ENCODE measurements at regions of chr11 and their contacts with region 1.

Region 1: DNA sequence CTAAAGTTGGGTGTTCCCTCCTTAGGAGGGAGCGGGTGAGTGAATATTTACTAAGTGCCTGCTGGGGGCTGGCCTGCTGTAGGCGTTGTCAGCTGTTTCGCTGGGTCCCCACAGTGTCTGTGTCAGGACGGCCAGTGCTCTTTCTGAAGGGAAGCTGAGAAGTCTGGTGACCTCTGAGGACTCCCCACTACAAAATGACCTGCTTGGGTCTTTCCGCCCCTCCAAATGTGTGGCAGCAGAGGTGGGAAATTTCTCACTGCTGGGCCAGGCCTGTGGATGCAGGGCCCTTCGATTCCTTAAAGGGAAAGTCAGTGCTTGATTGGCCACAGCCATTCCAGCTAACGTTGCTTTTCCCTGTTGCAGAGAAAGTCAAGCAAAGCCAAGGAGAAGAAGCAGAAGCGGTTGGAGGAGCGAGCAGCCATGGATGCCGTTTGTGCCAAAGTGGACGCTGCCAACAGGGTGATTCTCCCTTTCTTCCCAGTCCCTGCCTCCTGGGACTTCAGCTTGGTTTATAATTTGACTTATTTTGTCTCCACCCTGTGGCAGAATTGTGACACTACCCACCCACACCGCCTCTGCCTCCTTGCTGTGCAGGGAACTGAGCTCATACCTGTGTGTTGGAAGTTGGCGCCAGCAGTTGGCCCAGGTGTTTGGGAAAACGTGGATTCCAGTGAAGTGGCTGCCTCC is 6.8 kb downstream of the NAA40 start:
- DNase-seq: no peak
- H3K4me3 ChIP-seq: no peak overlapping the region
- H3K27me3 ChIP-seq: no peaks in the 10 kb centered on the region
- CTCF ChIP-seq: peak; percentile 68

Region 2: GRCh38 chr11:63445720-63446119 is 499.9 kb before region 1 on chr11:
- CTCF ChIA-PET with region 1: no interaction called
- POLR2A ChIA-PET with region 1: no interaction called
- DNase-seq: no peak
- H3K4me3 ChIP-seq: no peak overlapping the region
- H3K27me3 ChIP-seq: peaks cover 1% of the 10 kb centered on the region; the same call in 1 of the 2 replicates
- CTCF ChIP-seq: no peak

Region 3: DNA sequence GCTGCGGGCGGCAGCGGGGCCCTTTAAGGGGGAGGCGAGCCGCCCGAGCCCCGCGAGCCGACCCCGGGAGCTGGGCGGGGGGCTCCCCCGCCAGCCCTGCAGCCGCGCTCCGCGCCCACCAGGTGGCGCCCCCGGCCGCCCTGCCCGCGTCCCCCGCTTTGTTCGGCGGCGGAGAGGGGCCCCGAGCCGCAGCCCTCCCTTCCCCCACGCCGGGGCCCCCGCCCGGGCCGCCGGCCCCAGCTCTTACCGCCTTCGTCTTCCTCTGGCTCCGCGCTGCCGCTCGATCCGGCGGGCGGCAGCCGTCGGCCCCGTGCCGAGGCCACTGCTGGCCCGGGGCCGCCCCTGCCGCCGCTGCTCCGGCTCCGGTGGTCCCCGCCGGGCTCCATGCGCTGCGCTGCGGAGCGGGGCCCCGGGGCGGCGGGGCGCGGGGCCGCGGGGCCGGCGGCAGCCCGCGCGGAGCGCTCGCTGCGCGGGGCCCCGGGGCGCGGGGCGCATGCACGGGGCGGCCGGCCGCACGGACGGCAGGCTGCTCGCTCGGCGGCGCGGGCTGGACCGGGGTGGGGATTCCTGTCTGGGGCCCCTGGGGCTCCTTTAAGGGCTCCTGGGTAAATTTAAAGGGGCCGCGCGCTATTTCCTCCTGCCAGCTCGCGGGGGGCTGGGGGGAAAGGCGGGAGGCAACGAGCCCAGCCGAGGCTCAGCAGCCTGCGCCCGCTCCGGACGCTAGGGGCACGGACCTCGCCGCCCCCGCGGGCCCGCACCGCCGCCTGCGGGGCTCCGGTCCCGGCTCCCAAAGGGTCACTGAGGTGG is 177.2 kb before region 1 on chr11 and contains the start of gene ZFTA:
- CTCF ChIA-PET with region 1: interaction called, 20 read pairs
- POLR2A ChIA-PET with region 1: no interaction called
- DNase-seq: no peak
- H3K4me3 ChIP-seq: peak within 1 kb of the TSS; percentile 68
- H3K27me3 ChIP-seq: no peaks in the 10 kb centered on the region
- CTCF ChIP-seq: 0 out of 2 replicates have a peak, but pooled peaks have one; percentile 11
- polyA plus RNA-seq, gene ZFTA: 4.7 and 5.8 TPM in 2 replicates

Region 4: DNA sequence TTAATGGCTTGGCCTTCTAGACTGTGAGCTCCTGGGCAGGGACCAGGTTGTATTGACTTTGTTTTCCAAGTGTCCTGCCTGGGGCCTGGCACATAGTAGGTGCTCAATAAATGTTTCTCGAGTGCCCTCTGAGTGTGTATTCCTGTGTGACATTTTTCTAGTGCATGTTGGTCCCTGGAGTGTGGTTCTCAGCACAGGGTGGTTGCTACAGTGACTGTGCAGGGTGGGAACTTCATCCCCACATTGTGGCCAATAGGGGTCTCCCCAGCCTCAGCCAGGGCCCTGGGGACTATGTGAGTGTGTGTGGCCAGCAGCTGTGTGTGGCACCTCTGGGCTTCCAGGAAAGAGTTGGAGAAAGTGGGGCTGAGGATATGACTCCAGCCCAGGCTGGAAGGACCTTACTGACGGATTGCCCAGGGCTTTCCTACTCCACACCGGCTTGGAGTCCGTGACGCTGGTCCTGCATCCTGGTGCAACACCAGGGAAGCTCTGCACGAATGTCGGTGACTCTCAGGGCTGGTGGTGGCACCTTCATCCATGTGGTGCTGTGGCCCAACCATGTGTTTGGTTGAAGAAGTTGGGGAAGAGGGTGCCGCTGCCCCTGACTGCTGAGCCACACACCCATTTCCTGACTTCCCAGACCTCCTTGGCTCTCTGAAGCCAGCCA is 115.7 kb before region 1 on chr11:
- CTCF ChIA-PET with region 1: interaction called, 188 read pairs
- POLR2A ChIA-PET with region 1: no interaction called
- DNase-seq: no peak
- H3K4me3 ChIP-seq: no peak overlapping the region
- H3K27me3 ChIP-seq: no peaks in the 10 kb centered on the region
- CTCF ChIP-seq: peak; percentile 49

Region 5: DNA sequence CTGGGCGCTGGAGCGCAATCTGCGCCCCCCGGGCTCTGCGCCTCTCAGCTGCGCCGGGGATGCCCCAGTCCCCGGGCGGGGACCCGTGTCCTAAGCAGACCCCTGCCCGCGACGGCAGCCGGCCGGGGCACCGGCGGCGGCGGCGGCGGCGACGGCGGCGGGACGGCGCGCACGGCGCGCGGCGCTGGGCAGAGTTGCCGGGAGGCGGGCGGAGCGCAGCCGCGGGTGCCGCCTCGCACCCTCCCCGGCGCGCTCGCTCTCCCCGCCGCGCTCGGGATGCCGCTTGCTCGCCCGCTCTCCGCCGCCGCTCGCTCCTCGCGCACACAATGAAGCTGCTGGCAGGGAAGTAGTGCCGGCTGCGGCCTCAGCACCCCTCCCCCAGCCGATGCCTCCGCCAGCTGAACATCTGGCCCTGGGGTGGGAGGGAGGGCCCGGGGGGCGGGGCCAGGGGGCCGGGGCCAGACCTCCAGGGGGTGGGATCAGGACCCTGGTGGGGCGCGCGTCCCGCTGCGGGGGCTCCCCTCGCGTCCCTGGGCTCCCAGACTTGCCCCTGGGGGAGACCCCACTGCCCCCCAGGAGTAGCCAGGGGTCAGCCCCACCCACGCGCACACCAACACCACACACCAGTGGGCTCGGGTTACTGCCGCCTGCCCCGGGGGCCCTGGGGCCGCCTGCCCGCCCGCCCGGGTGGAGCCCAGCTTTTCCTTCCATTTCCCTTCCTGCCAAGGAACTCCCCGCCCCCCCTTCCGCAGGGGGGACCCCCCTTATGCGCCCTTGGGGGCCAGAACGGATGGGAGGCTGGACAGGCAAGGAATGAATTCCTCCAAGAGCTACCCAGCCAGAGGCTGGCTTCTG is 28.6 kb before region 1 on chr11 and contains the start of gene RCOR2:
- CTCF ChIA-PET with region 1: interaction called, 15 read pairs
- POLR2A ChIA-PET with region 1: no interaction called
- DNase-seq: no peak
- H3K4me3 ChIP-seq: peak within 1 kb of the TSS; percentile 57
- H3K27me3 ChIP-seq: peaks cover 2% of the 10 kb centered on the region; the same call in 1 of the 2 replicates
- CTCF ChIP-seq: no peak
- polyA plus RNA-seq, gene RCOR2: 1.6 and 2.5 TPM in 2 replicates

Region 6: DNA sequence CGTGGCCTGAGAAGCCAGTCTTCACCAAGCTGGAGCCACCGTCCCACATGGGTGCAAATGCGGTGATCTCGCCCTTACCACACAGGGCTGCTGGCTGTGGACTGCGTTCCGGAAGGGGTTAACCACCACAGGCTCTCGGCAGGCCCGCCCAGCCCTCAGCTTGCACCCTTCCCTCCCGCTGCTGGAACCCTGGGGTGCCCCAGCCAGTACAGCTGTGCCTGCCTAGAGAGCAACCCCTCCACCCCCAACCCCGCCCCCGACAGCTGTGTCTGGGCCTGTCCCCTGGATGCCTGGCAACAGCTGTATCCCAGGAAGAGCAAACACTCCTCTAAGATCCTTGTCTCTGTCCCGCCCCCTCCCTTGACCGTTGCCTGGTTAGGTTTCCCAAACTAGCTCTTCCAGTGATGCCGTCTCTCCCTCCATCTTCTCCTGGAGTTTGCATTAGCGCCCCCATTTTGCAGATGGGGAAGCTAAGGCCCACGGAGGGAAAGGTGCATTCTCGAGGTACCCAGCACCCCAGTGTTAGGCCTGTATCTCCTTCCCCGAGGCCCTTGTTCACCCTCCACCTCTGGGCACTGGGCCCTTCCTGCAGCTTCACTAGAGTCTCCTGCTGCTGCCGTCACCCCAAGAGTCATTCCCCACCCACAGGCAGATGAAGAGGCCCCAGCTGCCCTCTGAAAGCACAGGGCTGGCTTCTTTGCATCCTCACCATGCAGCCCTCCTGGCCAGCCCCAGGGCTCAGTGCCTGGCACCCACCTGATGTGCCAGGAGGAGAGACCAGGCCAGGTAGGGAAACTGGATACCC is 16.2 kb after region 1 on chr11:
- CTCF ChIA-PET with region 1: interaction called, 20 read pairs
- POLR2A ChIA-PET with region 1: interaction called, 6 read pairs
- DNase-seq: no peak
- H3K4me3 ChIP-seq: no peak overlapping the region
- H3K27me3 ChIP-seq: no peaks in the 10 kb centered on the region
- CTCF ChIP-seq: no peak

Region 7: GRCh38 chr11:64386306-64386702 is 440.7 kb after region 1 on chr11:
- CTCF ChIA-PET with region 1: no interaction called
- POLR2A ChIA-PET with region 1: no interaction called
- DNase-seq: peak; percentile 17
- H3K4me3 ChIP-seq: no peak overlapping the region
- H3K27me3 ChIP-seq: peaks cover 14% of the 10 kb centered on the region
- CTCF ChIP-seq: no peak